H1 (cell line): ENCODE measurements at regions of chr1 and their contacts with region 1.

Region 1: DNA sequence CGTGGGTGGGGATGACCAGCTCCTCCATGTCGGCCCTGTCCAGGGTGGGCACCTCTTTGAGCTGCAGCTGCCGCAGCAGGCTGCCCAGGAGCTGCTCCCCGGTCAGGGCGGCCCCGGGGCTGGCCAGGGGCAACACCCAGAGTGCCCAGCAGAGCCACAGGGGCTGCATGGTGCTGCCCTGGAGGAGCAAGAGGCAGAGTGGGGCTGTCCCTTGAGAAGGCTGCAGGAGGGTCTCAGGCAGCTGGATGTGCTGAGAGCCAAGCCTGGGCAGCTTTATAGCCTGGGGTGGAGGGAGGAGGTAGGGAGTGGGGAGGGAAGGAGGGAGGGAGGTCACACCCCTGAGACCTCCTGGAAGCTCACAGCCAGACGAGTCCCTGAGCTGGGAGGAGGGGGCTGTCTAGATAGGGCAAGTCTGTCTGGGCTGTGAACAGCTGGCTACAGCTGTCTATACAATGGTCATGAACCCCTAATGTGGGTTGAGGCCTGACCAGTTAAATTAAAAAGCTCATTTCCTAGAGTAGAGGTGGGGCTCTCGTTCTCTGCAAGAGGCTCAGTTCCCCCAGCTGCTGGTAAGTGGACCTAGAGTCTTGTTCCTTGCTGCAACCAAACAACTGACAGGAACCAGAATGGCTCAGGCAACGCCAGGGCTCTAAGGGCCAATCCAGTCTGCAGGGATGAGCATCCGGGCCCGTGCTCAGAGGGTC is at the start of gene LEFTY1:
- DNase-seq: no peak
- H3K4me3 ChIP-seq: peak within 1 kb of the TSS in 1 of 4 experiments; percentile 41; a peak in 1 of 8 replicates
- H3K27ac ChIP-seq: no peak within 1 kb of the TSS
- H3K4me1 ChIP-seq: peaks cover 10 to 34% (median 22%) of the 10 kb centered on the region in 4 experiments
- H3K27me3 ChIP-seq: peaks cover 0 to 14% (median 6%) of the 10 kb centered on the region in 4 experiments; a peak in 4 of 7 replicates
- CTCF ChIP-seq: no peak
- EP300 ChIP-seq: no peak
- POLR2A ChIP-seq: no peak
- RAD21 ChIP-seq: no peak
- total RNA-seq, gene LEFTY1: 8.4 and 11.7 TPM in 2 replicates

Region 2: GRCh38 chr1:225871359-225872074 is 17.5 kb before region 1 on chr1:
- CTCF ChIA-PET with region 1: interaction called, 79 read pairs
- POLR2A ChIA-PET with region 1: no interaction called
- DNase-seq: no peak
- H3K4me3 ChIP-seq: no peak overlapping the region
- H3K27ac ChIP-seq: no peak overlapping the region
- H3K4me1 ChIP-seq: peaks cover 0 to 3% (median 0%) of the 10 kb centered on the region in 4 experiments; a peak in 2 of 7 replicates
- H3K27me3 ChIP-seq: no peaks in the 10 kb centered on the region
- CTCF ChIP-seq: no peak
- EP300 ChIP-seq: no peak
- POLR2A ChIP-seq: no peak
- RAD21 ChIP-seq: no peak